ENCODE measurements at regions of chr4 and their contacts with region 1.

Region 1: GRCh38 chr4:108527723-108528122 is 92.7 kb upstream of the RPL34 start:
- DNase-seq: peak in 7 of 9 donors; percentile 41 to 61 (median 48)
- ATAC-seq: peak; percentile 59
- H3K4me3 ChIP-seq: peak overlapping the region; percentile 31
- H3K4me3 Mint-ChIP-seq: peak overlapping the region; percentile 16 to 81 (median 66)
- H3K27ac ChIP-seq: peak overlapping the region; percentile 54
- H3K27ac Mint-ChIP-seq: peak overlapping the region; percentile 12 to 89 (median 82)
- H3K4me1 ChIP-seq: peaks cover 20 to 61% of the 10 kb centered on the region in 2 donors
- H3K4me1 Mint-ChIP-seq: peaks cover 36 to 88% (median 82%) of the 10 kb centered on the region in 7 donors
- H3K27me3 ChIP-seq: no peaks in the 10 kb centered on the region
- H3K27me3 Mint-ChIP-seq: no peaks in the 10 kb centered on the region

Region 2: GRCh38 chr4:107564326-107564725 is 963.4 kb before region 1 on chr4:
- CTCF ChIA-PET with region 1: no interaction called
- POLR2A ChIA-PET with region 1: no interaction called
- intact Hi-C with region 1: no loop called
- DNase-seq: no peak
- ATAC-seq: no peak
- H3K4me3 ChIP-seq: no peak overlapping the region
- H3K4me3 Mint-ChIP-seq: no peak overlapping the region
- H3K27ac ChIP-seq: no peak overlapping the region
- H3K27ac Mint-ChIP-seq: no peak overlapping the region
- H3K4me1 ChIP-seq: no peaks in the 10 kb centered on the region
- H3K4me1 Mint-ChIP-seq: no peaks in the 10 kb centered on the region
- H3K27me3 ChIP-seq: no peaks in the 10 kb centered on the region
- H3K27me3 Mint-ChIP-seq: peaks cover 2 to 73% (median 29%) of the 10 kb centered on the region in 5 donors

Region 3: DNA sequence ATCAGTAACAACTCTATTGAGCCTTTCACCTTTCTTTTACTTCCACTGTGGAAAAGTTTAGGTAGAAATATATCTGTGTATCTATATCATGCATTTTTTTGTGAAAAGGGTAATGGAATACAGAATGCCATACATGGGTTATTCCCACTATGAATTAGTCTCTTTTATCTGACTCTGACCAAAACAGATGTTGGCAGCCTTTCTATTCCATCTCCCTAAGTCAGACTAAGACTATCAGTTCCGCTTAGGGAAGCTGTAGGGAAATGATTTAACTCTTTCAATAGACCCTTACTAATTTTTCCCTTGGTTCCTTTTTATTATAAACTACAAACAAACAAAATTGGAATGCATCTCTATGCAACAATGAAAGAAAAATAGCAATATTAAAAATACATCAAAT is 266.7 kb before region 1 on chr4:
- CTCF ChIA-PET with region 1: no interaction called
- POLR2A ChIA-PET with region 1: no interaction called
- intact Hi-C with region 1: no loop called
- DNase-seq: no peak
- ATAC-seq: no peak
- H3K4me3 ChIP-seq: no peak overlapping the region
- H3K4me3 Mint-ChIP-seq: no peak overlapping the region
- H3K27ac ChIP-seq: no peak overlapping the region
- H3K27ac Mint-ChIP-seq: no peak overlapping the region
- H3K4me1 ChIP-seq: no peaks in the 10 kb centered on the region
- H3K4me1 Mint-ChIP-seq: peaks cover 0 to 25% (median 17%) of the 10 kb centered on the region in 7 donors
- H3K27me3 ChIP-seq: no peaks in the 10 kb centered on the region
- H3K27me3 Mint-ChIP-seq: peaks cover 0 to 2% (median 0%) of the 10 kb centered on the region in 5 donors

Region 4: GRCh38 chr4:108540536-108540935 is 12.8 kb after region 1 on chr4:
- CTCF ChIA-PET with region 1: no interaction called
- POLR2A ChIA-PET with region 1: interaction called, 8 read pairs
- intact Hi-C with region 1: loop called in 1 of 2 experiments (anchors 1 kb)
- DNase-seq: no peak
- ATAC-seq: no peak
- H3K4me3 ChIP-seq: no peak overlapping the region
- H3K4me3 Mint-ChIP-seq: peak overlapping the region in 3 of 10 donors; percentile 0 to 48 (median 19)
- H3K27ac ChIP-seq: no peak overlapping the region
- H3K27ac Mint-ChIP-seq: peak overlapping the region in 4 of 9 donors; percentile 18 to 44 (median 30)
- H3K4me1 ChIP-seq: peaks cover 0 to 16% of the 10 kb centered on the region in 2 donors
- H3K4me1 Mint-ChIP-seq: peaks cover 18 to 63% (median 49%) of the 10 kb centered on the region in 7 donors
- H3K27me3 ChIP-seq: no peaks in the 10 kb centered on the region
- H3K27me3 Mint-ChIP-seq: no peaks in the 10 kb centered on the region

Measured in naive thymus-derived CD4-positive, alpha-beta T cell (primary cell).